WTC11 (cell line): ENCODE measurements at regions of chr6 and their contacts with region 1.

Region 1: DNA sequence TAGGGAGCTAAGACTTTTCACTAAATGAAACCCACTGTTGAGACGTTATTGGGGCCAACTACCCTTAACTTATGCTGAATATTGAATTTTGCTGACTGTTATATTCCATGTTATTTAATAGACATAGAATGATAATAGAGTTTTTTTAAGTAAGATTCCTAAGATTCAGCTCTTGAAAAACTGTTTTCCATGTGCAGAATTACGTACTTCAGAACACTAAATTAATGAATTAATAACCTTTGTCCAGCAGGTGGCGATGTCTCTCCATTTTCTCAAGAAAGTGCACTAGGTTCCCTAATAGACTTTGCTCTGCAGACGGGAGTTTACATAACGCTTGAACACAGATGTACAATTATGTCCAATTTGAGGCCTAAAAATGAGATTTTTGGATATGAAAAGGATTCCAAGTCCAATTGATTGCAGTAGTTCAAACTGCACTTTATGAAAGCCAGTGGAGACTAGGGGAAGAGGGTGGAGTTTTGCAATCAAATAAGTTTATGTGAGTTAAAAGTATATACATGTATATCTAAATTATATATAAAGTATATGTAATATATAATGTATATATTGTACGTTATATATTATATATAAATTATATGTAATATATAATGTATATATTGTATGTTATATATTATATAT is 282.1 kb downstream of the UST start:
- DNase-seq: no peak
- ATAC-seq: no peak
- H3K4me3 Mint-ChIP-seq: no peak overlapping the region
- H3K27ac Mint-ChIP-seq: no peak overlapping the region
- H3K4me1 Mint-ChIP-seq: peaks cover 28% of the 10 kb centered on the region
- H3K27me3 Mint-ChIP-seq: no peaks in the 10 kb centered on the region
- CTCF ChIP-seq: peak; percentile 63; the same call in 1 of the 2 replicates

Region 2: GRCh38 chr6:148559848-148560433 is 468.9 kb before region 1 on chr6:
- CTCF ChIA-PET with region 1: interaction called, 14 read pairs
- POLR2A ChIA-PET with region 1: no interaction called
- DNase-seq: peak; percentile 85
- ATAC-seq: peak; percentile 86
- H3K4me3 Mint-ChIP-seq: peak overlapping the region; percentile 36; the same call in 1 of the 2 replicates
- H3K27ac Mint-ChIP-seq: no peak overlapping the region
- H3K4me1 Mint-ChIP-seq: 0 out of 2 replicates have a peak, but pooled peaks cover 6% of the 10 kb centered on the region
- H3K27me3 Mint-ChIP-seq: peaks cover 21% of the 10 kb centered on the region
- CTCF ChIP-seq: peak; percentile 94

Region 3: GRCh38 chr6:148671085-148671484 is 357.8 kb before region 1 on chr6:
- CTCF ChIA-PET with region 1: no interaction called
- POLR2A ChIA-PET with region 1: no interaction called
- DNase-seq: peak; percentile 35
- ATAC-seq: peak; percentile 82
- H3K4me3 Mint-ChIP-seq: no peak overlapping the region
- H3K27ac Mint-ChIP-seq: no peak overlapping the region
- H3K4me1 Mint-ChIP-seq: peaks cover 6% of the 10 kb centered on the region
- H3K27me3 Mint-ChIP-seq: peaks cover 3% of the 10 kb centered on the region; the same call in 1 of the 2 replicates
- CTCF ChIP-seq: no peak

Region 4: GRCh38 chr6:148996815-148997214 is 32.1 kb before region 1 on chr6:
- CTCF ChIA-PET with region 1: no interaction called
- POLR2A ChIA-PET with region 1: no interaction called
- DNase-seq: no peak
- ATAC-seq: no peak
- H3K4me3 Mint-ChIP-seq: no peak overlapping the region
- H3K27ac Mint-ChIP-seq: peak overlapping the region; percentile 82
- H3K4me1 Mint-ChIP-seq: peaks cover 24% of the 10 kb centered on the region
- H3K27me3 Mint-ChIP-seq: no peaks in the 10 kb centered on the region
- CTCF ChIP-seq: no peak

Region 5: GRCh38 chr6:149170564-149171452 is 141.9 kb after region 1 on chr6:
- CTCF ChIA-PET with region 1: no interaction called
- POLR2A ChIA-PET with region 1: no interaction called
- DNase-seq: no peak
- ATAC-seq: no peak
- H3K4me3 Mint-ChIP-seq: no peak overlapping the region
- H3K27ac Mint-ChIP-seq: no peak overlapping the region
- H3K4me1 Mint-ChIP-seq: no peaks in the 10 kb centered on the region
- H3K27me3 Mint-ChIP-seq: no peaks in the 10 kb centered on the region
- CTCF ChIP-seq: no peak